ENCODE measurements at regions of chr4 and their contacts with region 1.

Region 1: GRCh38 chr4:75895744-75896314 is 6.4 kb downstream of the PPEF2 start:
- DNase-seq: no peak
- ATAC-seq: no peak
- H3K4me3 ChIP-seq: no peak overlapping the region
- H3K27ac ChIP-seq: no peak overlapping the region
- H3K4me1 ChIP-seq: no peaks in the 10 kb centered on the region
- H3K27me3 ChIP-seq: no peaks in the 10 kb centered on the region

Region 2: DNA sequence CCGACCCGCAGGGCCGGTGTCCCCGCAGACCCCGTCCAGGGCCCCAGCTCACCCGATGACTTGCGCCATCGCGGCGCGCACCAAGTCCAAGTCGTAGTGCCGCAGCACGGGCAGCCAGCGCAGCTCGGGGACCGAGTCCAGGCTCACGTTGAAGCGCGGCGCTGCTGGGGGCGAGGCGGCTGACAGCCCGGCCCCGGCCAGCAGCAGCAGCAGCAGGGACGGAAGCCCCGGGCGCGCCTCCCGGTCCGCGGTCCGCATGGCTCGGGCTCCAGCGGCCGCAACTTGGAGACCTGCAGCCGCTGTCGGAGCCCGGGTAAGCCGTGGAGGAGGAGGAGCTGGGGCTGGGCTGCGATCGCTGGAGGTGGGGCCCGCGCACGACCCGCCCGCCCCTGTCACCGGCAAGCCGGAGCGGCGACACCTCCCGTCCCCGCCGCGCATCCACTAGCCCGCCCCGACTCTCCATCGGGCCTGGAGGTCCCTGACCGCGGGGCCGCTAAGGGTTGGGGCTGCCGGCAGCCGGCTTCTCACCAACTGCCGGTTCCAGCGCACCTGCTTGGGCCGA is 44.9 kb after region 1 on chr4 and contains the start of gene NAAA:
- intact Hi-C with region 1: loop called in 1 of 2 experiments (anchors 10 kb)
- DNase-seq: peak; percentile 90 to 93
- ATAC-seq: peak; percentile 92
- H3K4me3 ChIP-seq: peak within 1 kb of the TSS; percentile 55
- H3K27ac ChIP-seq: peak within 1 kb of the TSS in 1 of 2 donors; percentile 41
- H3K4me1 ChIP-seq: no peaks in the 10 kb centered on the region
- H3K27me3 ChIP-seq: no peaks in the 10 kb centered on the region
- total RNA-seq, gene NAAA: 24.9 to 41.4 TPM